ENCODE measurements at regions of chr22 and their contacts with region 1.

Region 1: DNA sequence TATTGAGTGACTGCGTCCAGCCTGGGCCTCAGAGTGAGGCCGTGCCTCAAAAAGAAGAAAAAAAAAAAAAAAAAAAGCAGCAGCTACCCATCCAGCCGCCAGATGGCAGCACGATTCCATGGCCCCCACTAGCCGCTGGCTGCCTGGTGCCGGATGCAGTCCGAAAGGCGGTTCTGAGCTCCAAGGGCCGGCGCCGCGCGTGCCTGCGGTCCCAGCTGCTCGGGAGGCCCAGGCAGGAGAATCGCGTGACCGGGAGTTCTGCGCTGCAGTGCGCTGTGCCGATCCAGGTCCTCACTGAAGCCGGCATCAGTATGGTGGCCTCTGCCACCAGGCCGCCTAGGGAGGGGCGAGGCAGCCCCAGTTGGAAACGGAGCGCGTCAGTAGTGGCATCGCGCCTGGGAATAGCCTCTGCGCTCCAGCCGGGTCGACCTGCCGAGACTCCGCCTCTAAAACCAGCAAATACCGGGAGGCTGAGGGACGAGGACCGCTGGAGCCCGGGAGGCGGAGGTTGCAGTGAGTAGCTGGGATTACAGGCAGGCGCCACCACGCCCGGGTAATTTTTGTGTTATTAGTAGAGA is 19.3 kb downstream of the SCARF2 start:
- DNase-seq: peak; percentile 79 to 80
- H3K4me3 ChIP-seq: no peak overlapping the region
- H3K27ac ChIP-seq: no peak overlapping the region
- H3K4me1 ChIP-seq: no peaks in the 10 kb centered on the region
- H3K27me3 ChIP-seq: no peaks in the 10 kb centered on the region
- CTCF ChIP-seq: peak; percentile 66 to 91 (median 83)
- POLR2A ChIP-seq: no peak

Region 2: DNA sequence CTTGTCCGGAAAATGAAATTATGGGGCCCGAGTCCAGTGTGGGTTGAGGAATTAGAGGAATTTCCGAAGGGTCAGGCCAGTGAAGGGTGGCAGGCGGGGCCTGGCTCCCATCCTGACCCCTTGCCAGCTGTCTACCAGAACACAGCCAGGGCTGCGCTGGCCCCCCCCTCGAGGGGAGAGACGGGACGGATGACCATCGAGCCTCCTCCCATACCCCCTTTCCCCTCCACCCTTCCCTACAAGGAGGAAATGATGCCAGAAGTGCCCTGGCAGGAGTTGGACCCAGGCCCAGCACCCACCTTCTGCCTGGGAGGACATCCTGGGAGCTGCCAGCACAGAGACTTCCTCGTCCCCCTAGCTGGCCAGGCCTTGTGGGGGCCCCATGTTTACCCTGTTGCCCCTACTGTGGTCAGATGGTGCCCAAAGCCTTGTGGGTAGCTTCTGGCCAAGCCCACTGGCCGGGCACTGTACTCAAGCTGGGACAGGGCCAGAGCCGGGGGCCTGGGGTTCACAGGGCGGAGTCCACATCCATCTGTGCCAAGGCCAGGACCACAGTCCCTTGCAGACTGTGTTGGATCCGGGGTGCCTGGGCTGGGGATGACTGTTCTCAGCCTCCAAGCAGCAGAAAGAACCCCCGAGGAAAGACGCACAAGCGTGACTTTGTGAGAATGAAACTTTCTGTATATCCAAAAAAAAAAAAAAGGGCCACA is 422.5 kb before region 1 on chr22:
- intact Hi-C with region 1: no loop called
- DNase-seq: peak; percentile 77 to 87
- H3K4me3 ChIP-seq: no peak overlapping the region
- H3K27ac ChIP-seq: peak overlapping the region; percentile 69 to 86 (median 75)
- H3K4me1 ChIP-seq: peaks cover 55 to 89% of the 10 kb centered on the region in 2 donors
- H3K27me3 ChIP-seq: no peaks in the 10 kb centered on the region
- CTCF ChIP-seq: no peak
- POLR2A ChIP-seq: no peak

Region 3: GRCh38 chr22:20456064-20456721 is 37.9 kb after region 1 on chr22:
- intact Hi-C with region 1: loop called (anchors 2 kb)
- DNase-seq: peak; percentile 76 to 77
- H3K4me3 ChIP-seq: no peak overlapping the region
- H3K27ac ChIP-seq: no peak overlapping the region
- H3K4me1 ChIP-seq: no peaks in the 10 kb centered on the region
- H3K27me3 ChIP-seq: no peaks in the 10 kb centered on the region
- CTCF ChIP-seq: peak; percentile 65 to 94 (median 92)
- POLR2A ChIP-seq: no peak

Region 4: GRCh38 chr22:20495861-20496681 is 77.8 kb after region 1 on chr22:
- intact Hi-C with region 1: loop called (anchors 5 kb)
- DNase-seq: peak; percentile 93 to 94
- H3K4me3 ChIP-seq: peak overlapping the region; percentile 10 to 78 (median 16)
- H3K27ac ChIP-seq: peak overlapping the region; percentile 87 to 92 (median 90)
- H3K4me1 ChIP-seq: peaks cover 7 to 17% of the 10 kb centered on the region in 2 donors
- H3K27me3 ChIP-seq: no peaks in the 10 kb centered on the region
- CTCF ChIP-seq: peak; percentile 74 to 91 (median 86)
- POLR2A ChIP-seq: peak in 1 of 2 donors; percentile 84